ENCODE measurements at regions of chr17 and their contacts with region 1.

Region 1: DNA sequence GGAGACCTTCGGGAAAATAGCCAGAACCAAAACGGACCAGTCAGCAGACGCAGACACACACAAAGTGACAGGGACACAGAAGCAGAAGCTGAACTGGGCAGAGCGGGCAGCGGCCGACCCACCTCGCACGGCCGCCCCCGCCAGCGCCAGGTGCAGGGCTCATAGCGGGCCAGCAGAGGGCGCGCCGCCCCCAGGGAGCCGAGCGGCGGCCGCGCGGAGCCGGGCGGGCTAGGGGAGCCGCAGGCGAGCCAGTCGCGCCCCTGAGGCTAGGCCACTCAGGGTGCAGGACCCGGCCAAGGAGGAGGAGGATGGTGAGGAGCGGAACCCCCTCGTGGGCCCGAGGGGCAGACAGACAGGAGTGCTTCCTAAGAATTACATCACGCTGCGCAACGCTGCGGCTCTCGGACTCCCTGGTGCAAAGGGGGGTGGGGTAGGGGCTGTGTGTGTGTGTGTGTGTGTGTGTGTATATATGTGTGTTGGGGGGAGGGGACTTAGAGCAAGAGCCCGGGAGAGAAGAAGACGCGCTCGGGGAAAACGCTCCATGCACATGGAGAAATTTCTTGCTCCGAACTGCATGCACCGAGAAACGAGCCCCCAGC is 913 bp upstream of the NOG start:
- DNase-seq: peak; percentile 68 to 79
- ATAC-seq: peak; percentile 76 to 82 (median 80)
- H3K4me3 ChIP-seq: peak overlapping the region; percentile 81
- H3K27ac ChIP-seq: no peak overlapping the region
- H3K4me1 ChIP-seq: peaks cover 22% of the 10 kb centered on the region
- H3K27me3 ChIP-seq: peaks cover 0 to 1% (median 0%) of the 10 kb centered on the region in 3 donors
- CTCF ChIP-seq: peak; percentile 100

Region 2: GRCh38 chr17:56489980-56490379 is 102.6 kb before region 1 on chr17:
- intact Hi-C with region 1: no loop called
- DNase-seq: no peak
- ATAC-seq: no peak
- H3K4me3 ChIP-seq: no peak overlapping the region
- H3K27ac ChIP-seq: no peak overlapping the region
- H3K4me1 ChIP-seq: no peaks in the 10 kb centered on the region
- H3K27me3 ChIP-seq: no peaks in the 10 kb centered on the region
- CTCF ChIP-seq: no peak

Region 3: DNA sequence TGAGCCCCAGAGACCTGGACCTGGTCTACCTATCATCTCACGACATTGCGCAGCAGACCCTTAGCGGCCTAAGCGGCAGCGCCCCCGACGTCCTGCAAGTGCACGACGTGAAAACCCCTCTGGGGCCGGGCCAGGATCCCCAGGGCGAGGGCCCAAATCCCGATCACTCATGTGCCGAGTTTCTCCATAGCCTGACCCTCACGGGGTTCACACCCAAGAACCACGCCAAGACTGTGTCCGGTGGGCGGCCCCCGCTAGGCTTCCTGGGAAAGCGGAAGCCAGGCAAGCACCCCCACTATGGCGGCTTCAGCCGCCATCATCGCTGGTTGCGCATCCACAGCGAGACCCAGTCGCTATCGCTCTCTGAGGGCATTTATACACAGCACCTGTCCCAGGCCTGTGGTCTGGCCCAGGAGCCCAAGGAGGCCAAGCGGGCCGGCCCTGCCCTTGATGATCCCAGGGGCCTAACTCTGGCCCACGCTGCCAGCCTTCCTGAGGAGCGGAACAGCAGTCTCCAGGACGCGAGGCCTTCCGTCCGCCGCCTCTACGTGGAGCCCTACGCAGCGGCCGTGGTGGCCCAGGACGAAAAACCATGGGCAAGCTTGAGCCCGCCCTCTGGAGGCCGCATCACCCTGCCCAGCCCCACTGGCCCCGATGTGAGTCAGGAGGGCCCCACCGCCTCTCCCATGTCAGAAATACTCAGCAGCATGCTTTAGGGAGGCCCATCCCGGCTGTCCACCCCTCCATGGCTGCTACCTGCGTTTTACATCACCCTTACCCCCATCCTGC is 81.8 kb before region 1 on chr17:
- intact Hi-C with region 1: no loop called
- DNase-seq: peak in 1 of 2 donors; percentile 44
- ATAC-seq: no peak
- H3K4me3 ChIP-seq: no peak overlapping the region
- H3K27ac ChIP-seq: no peak overlapping the region
- H3K4me1 ChIP-seq: no peaks in the 10 kb centered on the region
- H3K27me3 ChIP-seq: no peaks in the 10 kb centered on the region
- CTCF ChIP-seq: no peak

Region 4: DNA sequence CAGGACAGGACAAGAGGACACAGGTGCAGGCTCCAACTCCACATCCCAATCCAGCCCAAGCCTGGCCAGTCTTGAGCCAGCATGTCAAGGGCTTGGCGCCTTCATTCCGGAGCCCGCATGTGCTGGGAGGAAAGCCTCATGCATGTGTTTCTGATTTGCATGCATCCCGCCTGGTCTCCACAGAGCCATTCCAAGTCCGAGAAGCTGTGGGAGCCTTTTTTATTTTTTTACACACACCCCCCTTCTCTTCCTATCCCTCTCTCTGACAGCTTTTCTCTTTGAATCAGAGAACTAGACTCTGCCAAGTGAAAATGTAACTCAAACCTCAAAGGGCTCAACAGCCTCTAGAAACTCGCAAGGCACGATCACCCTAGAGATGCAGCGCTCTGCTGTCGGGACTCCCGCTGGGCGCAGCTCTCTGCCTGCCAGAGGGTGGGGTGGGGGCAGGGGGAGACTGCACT is 46.0 kb after region 1 on chr17:
- intact Hi-C with region 1: no loop called
- DNase-seq: no peak
- ATAC-seq: no peak
- H3K4me3 ChIP-seq: no peak overlapping the region
- H3K27ac ChIP-seq: no peak overlapping the region
- H3K4me1 ChIP-seq: no peaks in the 10 kb centered on the region
- H3K27me3 ChIP-seq: peaks cover 0 to 15% (median 0%) of the 10 kb centered on the region in 3 donors
- CTCF ChIP-seq: no peak

Region 5: GRCh38 chr17:56679115-56679766 is 86.7 kb after region 1 on chr17:
- intact Hi-C with region 1: loop called (anchors 2 to 5 kb)
- DNase-seq: peak in 1 of 2 donors; percentile 32
- ATAC-seq: peak in 3 of 4 donors; percentile 47 to 81 (median 60)
- H3K4me3 ChIP-seq: peak overlapping the region; percentile 61
- H3K27ac ChIP-seq: no peak overlapping the region
- H3K4me1 ChIP-seq: no peaks in the 10 kb centered on the region
- H3K27me3 ChIP-seq: peaks cover 0 to 15% (median 2%) of the 10 kb centered on the region in 3 donors
- CTCF ChIP-seq: peak; percentile 57

Measured in psoas muscle (tissue), 8 donors.